Sciatic nerve (tissue), 2 donors: ENCODE measurements at regions of chr4 and their contacts with region 1.

Region 1: DNA sequence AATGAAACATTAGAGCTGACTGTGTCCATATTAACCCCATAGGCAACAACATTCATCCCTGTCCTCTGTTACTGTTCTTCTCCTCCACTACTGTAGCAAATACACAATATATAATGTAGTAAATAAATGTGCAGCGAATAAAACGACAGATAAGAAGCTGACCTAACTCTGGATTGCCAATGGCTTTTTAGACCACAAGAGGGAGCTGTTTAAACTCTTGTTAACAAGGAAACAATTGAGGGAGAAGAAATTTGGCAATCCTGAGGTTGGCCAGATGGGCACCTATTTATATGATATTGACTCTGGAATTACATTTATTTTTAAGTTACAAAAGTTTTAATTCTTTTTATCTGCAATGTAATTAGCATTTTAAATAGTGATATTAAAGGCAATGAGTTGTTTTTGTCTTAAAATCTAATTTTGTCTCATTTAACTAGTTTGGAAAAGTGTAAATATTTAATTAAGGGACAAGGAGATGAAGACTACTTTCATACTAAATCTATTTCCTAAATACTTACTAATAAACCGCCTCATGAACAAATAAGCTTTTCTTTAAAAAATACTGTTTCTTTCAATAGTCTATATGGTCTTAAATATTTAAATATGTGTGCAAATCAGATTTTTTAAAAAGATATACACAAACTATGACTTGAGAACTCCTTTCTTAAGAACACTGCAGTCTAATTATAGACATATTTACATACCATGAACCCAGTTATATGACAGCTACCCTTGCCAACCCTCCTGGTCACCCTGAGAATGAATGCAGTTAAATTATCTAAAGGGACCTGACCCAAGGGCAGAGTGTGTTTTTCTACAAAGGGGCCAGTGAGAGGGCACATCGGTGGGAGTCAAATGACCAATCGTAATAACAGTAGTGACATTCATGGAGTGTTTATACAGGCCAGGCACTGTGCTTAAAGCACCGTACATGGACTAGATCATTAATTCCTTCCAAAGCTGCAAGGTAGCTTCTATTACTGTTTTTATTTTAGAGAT is 52.9 kb upstream of the HPF1 start:
- DNase-seq: no peak
- ATAC-seq: peak; percentile 67

Region 2: GRCh38 chr4:169573889-169574288 is 236.7 kb before region 1 on chr4:
- intact Hi-C with region 1: no loop called
- DNase-seq: no peak
- ATAC-seq: no peak

Region 3: GRCh38 chr4:170051402-170051801 is 240.8 kb after region 1 on chr4:
- intact Hi-C with region 1: loop called (anchors 10 kb)
- DNase-seq: no peak
- ATAC-seq: no peak